Spleen (tissue), 13 donors: ENCODE measurements at regions of chr7 and their contacts with region 1.

Region 1: DNA sequence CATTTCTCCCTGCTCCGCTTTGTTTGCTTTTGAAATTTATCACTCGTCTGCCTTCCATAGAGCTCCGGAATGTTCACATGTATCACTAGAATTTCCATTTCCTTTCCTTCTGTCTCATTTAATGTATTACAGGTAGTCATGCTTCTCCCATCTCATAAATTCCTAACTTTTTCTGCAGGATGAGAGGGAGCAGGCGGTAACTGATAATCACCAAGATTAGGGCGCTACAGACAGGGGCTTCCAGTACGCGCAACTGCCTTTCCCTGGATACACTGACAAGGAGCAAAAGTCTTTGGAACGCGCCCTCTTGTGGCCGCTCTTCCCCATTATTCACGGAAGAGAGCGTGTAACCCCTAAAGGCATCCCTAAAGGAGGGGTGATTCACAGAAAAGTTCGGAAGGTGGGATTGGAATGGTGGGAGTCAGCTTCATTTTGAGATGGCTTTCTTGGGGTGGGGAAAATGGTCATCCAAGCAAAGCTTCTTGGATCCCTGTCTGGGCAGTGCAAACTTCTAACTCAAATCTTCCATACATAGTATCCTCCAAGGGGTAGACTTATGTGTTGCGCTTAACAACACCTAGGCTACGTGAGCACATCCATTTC is 6.5 kb downstream of the INHBA start:
- DNase-seq: peak; percentile 85
- H3K4me3 ChIP-seq: peak overlapping the region in 1 of 8 donors; percentile 12
- H3K27ac ChIP-seq: peak overlapping the region in 1 of 8 donors; percentile 8
- H3K4me1 ChIP-seq: peaks cover 3 to 77% (median 21%) of the 10 kb centered on the region in 6 donors
- H3K27me3 ChIP-seq: peaks cover 0 to 62% (median 19%) of the 10 kb centered on the region in 7 donors
- CTCF ChIP-seq: peak; percentile 19 to 75 (median 59)
- POLR2A ChIP-seq: no peak

Region 2: GRCh38 chr7:40329601-40330153 is 1366.7 kb before region 1 on chr7:
- intact Hi-C with region 1: loop called (anchors 5 kb)
- DNase-seq: no peak
- H3K4me3 ChIP-seq: no peak overlapping the region
- H3K27ac ChIP-seq: no peak overlapping the region
- H3K4me1 ChIP-seq: no peaks in the 10 kb centered on the region
- H3K27me3 ChIP-seq: no peaks in the 10 kb centered on the region
- CTCF ChIP-seq: peak in 10 of 11 experiments; percentile 35 to 78 (median 70)
- POLR2A ChIP-seq: no peak

Region 3: DNA sequence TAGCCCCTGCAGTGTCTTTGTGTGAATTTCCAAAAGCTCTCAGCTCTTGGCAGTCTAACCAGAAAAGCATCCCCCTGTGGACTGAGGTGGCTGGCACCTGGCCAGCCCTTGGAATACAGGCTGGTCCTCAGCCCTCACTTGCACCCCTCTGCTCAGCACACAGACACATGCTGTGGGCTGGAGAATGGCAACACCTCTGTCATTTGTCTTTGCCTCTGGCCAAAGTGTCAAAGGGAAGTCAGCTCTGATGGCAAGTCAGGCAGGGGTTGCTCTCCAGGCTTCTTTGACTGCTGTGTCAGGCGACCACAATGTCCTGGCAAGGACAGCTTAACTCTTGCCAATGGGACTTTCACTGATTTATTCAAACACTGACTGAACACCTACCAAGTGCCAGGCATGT is 718.4 kb before region 1 on chr7:
- intact Hi-C with region 1: no loop called
- DNase-seq: no peak
- H3K4me3 ChIP-seq: no peak overlapping the region
- H3K27ac ChIP-seq: no peak overlapping the region
- H3K4me1 ChIP-seq: no peaks in the 10 kb centered on the region
- H3K27me3 ChIP-seq: no peaks in the 10 kb centered on the region
- CTCF ChIP-seq: no peak
- POLR2A ChIP-seq: no peak

Region 4: DNA sequence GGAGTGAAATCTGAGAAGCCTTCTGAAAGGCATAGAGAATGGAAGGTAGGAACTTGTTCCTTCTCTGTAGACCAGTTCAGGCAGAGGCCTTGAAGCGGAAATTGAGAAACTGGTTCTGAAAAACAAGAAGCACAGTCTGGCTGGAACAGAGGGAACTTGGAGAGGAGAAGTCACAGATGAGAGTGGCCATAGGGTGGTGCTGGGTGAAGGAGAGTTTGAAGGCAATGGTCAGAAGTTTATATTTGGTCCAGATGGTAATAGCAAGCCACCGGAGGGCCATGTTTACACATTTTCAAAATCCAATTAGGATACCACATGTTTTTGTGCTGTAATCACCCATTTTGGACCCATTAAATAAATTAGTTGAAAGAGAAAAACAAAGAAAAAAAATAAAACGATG is 686.0 kb before region 1 on chr7:
- intact Hi-C with region 1: loop called (anchors 10 kb)
- DNase-seq: no peak
- H3K4me3 ChIP-seq: no peak overlapping the region
- H3K27ac ChIP-seq: peak overlapping the region in 4 of 8 donors; percentile 6 to 65 (median 42)
- H3K4me1 ChIP-seq: peaks cover 0 to 11% (median 4%) of the 10 kb centered on the region in 6 donors
- H3K27me3 ChIP-seq: no peaks in the 10 kb centered on the region
- CTCF ChIP-seq: no peak
- POLR2A ChIP-seq: no peak

Region 5: DNA sequence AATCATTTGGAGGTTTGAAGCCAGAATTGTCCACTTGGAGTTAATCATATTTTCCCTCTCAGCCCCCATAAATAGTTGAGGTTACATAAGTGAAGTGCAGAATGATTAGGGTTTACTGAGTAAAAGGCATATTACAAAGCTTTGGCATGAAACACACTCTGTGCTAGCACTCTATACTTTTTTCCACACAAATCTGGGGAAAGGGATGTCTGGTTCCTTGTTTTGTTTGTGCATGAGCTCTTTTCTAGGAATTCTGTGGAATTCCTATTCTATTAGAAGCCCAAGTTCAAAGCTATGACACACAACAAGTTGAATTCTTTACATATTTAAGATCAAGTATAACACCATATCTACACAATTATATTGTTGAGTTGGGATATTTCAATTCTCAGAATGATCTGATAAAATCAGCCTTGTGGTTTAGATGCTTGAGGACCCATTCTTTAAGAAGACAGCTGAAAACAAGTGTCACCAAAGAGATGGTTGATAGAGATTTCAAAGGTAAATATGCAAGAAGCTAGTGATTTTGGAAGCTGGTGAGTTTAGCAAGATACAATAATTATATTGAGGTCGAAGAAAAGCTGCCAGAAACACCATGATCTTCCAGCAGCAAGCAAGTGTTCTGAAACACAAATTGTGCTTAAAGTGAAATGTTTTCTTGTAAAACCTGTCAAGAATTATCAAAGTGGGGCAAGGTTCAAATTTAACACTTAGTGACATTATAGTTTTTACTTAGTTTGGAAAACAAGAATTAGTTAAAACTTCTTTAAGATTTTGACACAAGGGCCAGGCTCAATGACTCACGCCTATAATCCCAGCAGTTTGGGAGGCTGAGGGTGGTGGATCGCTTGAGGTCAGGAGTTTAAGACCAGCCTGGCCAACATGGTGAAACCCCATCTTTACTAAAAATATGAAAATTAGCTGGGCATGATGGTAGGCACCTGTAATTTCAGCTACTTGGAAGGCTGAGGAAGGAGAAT is 116.2 kb before region 1 on chr7:
- intact Hi-C with region 1: no loop called
- DNase-seq: no peak
- H3K4me3 ChIP-seq: no peak overlapping the region
- H3K27ac ChIP-seq: no peak overlapping the region
- H3K4me1 ChIP-seq: no peaks in the 10 kb centered on the region
- H3K27me3 ChIP-seq: no peaks in the 10 kb centered on the region
- CTCF ChIP-seq: no peak
- POLR2A ChIP-seq: no peak